ENCODE measurements at regions of chrX and their contacts with region 1.

Region 1: GRCh38 chrX:155313766-155314165 is 20.6 kb downstream of the CLIC2 start:
- DNase-seq: no peak
- H3K4me3 ChIP-seq: no peak overlapping the region
- H3K27ac ChIP-seq: no peak overlapping the region
- H3K4me1 ChIP-seq: no peaks in the 10 kb centered on the region
- H3K27me3 ChIP-seq: no peaks in the 10 kb centered on the region
- CTCF ChIP-seq: no peak
- POLR2A ChIP-seq: no peak

Region 2: DNA sequence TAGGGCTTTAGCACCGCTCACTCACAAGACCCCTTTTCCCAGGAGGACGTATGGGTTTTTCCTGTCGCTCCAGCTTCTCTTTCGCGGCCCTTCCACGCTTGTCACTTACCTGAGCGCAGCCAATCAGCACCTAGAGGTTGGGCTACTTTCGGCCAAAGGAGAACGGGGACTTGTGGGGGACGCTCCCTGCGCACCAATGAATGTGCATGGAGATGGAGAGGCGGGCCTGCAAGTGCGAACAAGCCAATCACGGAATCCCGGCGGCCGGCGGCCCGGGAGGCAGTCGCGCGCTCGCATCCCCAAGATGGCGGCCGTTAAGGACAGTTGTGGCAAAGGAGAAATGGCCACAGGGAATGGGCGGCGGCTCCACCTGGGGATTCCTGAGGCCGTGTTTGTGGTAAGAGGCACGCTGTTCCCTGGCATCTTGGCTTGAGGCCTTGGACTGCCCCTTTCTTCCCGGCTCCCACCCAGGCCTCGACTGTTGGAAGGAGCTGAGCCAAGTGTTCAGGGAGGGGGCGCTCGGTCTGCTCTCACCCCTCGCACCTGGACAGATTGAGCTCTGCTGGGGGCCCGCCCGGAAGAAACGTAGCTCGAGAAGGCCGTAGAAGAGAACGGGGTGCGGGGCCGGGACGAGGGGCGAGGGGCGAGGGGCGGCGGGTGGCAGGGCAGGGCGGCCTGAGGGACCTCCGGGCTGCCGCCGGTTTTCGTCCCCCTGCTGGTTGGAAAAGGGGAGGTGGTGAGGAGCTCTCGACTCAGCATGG is 97.4 kb before region 1 on chrX and contains the start of gene VBP1:
- intact Hi-C with region 1: loop called (anchors 5 kb)
- DNase-seq: peak; percentile 84 to 92
- H3K4me3 ChIP-seq: peak within 1 kb of the TSS; percentile 67 to 88 (median 74)
- H3K27ac ChIP-seq: peak within 1 kb of the TSS; percentile 87 to 96
- H3K4me1 ChIP-seq: no peaks in the 10 kb centered on the region
- H3K27me3 ChIP-seq: no peaks in the 10 kb centered on the region
- CTCF ChIP-seq: peak in 1 of 3 donors; percentile 13
- POLR2A ChIP-seq: no peak
- total RNA-seq, gene VBP1: 29.1 to 30.7 (median 29.8) TPM

Region 3: GRCh38 chrX:155774387-155774786 is 460.6 kb after region 1 on chrX:
- intact Hi-C with region 1: no loop called
- DNase-seq: no peak
- H3K4me3 ChIP-seq: no peak overlapping the region
- H3K27ac ChIP-seq: no peak overlapping the region
- H3K4me1 ChIP-seq: no peaks in the 10 kb centered on the region
- H3K27me3 ChIP-seq: peaks cover 0 to 4% of the 10 kb centered on the region in 2 donors
- CTCF ChIP-seq: no peak
- POLR2A ChIP-seq: no peak

Measured in breast epithelium (tissue), 4 donors.